ENCODE measurements at regions of chrX and their contacts with region 1.

Region 1: DNA sequence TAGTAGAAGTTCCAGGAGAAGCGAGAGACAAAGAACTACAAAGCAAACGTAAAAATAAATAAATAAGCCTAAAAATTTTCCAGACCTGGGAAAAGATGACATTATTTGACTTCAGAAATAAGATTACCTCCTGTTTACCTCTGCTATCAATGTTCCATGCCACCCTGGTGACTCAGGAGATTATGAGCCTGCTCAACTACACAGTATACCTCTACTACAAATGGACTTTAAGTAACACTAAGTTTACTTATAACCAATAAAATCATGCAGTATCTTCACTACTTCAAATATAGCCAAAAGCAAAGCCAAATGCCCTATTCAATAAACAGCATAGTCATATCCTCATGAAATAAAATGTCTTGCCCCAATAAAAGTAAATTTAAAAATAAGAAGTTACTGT is 105.4 kb downstream of the CYLC1 start:
- DNase-seq: no peak
- ATAC-seq: no peak

Region 2: GRCh38 chrX:83892433-83892832 is 73.9 kb before region 1 on chrX:
- intact Hi-C with region 1: loop called (anchors 5 kb)
- DNase-seq: no peak
- ATAC-seq: no peak

Region 3: DNA sequence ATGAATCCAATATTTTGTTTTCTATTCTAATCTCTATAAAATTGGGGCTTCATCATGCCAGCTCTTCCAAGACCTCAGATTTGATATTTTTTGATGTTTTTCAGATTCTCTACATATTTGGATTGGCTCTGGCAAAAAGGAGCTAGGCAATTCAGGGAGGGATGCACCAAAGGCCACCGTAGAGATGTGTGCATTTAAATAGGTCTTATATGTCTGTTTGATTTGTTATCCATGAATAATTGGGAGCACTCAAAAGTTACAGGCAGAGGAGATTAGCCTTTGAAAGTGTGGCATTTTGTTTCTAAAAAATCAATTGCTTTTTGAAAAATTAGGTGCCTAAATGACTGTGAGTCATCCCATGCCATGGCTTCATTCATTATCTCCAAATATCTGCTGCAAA is 368.8 kb after region 1 on chrX:
- intact Hi-C with region 1: no loop called
- DNase-seq: no peak
- ATAC-seq: no peak

Region 4: GRCh38 chrX:85828771-85829170 is 1862.4 kb after region 1 on chrX:
- intact Hi-C with region 1: no loop called
- DNase-seq: no peak
- ATAC-seq: no peak

Measured in sciatic nerve (tissue), 2 donors.